ENCODE measurements at regions of chr12 and their contacts with region 1.

Region 1: GRCh38 chr12:122130150-122130549 is 43.9 kb downstream of the IL31 start:
- DNase-seq: no peak
- ATAC-seq: no peak
- H3K4me3 ChIP-seq: no peak overlapping the region
- H3K4me3 Mint-ChIP-seq: no peak overlapping the region
- H3K27ac ChIP-seq: no peak overlapping the region
- H3K27ac Mint-ChIP-seq: no peak overlapping the region
- H3K4me1 ChIP-seq: peaks cover 14% of the 10 kb centered on the region
- H3K4me1 Mint-ChIP-seq: peaks cover 12 to 19% of the 10 kb centered on the region in 2 donors
- H3K27me3 ChIP-seq: no peaks in the 10 kb centered on the region
- H3K27me3 Mint-ChIP-seq: no peaks in the 10 kb centered on the region
- CTCF ChIP-seq: no peak

Region 2: DNA sequence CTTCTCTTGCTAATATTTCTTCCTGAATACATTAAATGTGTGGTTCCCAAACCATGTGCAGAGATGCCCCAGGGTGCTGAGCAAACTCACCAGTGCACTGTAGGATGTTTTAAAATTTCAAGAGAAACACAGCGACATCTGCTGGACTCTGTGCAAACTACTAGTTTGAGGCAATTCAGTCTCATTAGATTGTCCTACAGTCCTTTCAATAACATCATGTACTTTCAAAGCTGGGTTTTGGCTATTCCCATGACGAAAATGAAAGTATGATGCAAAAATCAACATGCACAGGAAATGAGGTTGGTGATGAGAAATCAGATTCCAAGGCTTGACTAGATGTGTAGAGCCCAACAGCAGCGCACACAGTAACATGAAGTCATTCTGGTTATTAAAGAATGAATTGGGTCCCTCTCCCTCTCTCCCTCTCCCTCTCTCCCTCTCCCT is 226.1 kb after region 1 on chr12:
- intact Hi-C with region 1: loop called (anchors 5 kb)
- DNase-seq: peak; percentile 28 to 73
- ATAC-seq: peak; percentile 80 to 85 (median 82)
- H3K4me3 ChIP-seq: no peak overlapping the region
- H3K4me3 Mint-ChIP-seq: no peak overlapping the region
- H3K27ac ChIP-seq: no peak overlapping the region
- H3K27ac Mint-ChIP-seq: no peak overlapping the region
- H3K4me1 ChIP-seq: peaks cover 4% of the 10 kb centered on the region
- H3K4me1 Mint-ChIP-seq: peaks cover 16% of the 10 kb centered on the region in 2 donors
- H3K27me3 ChIP-seq: no peaks in the 10 kb centered on the region
- H3K27me3 Mint-ChIP-seq: no peaks in the 10 kb centered on the region
- CTCF ChIP-seq: peak; percentile 85

Measured in natural killer cell (primary cell).